ENCODE measurements at regions of chr1 and their contacts with region 1.

Region 1: DNA sequence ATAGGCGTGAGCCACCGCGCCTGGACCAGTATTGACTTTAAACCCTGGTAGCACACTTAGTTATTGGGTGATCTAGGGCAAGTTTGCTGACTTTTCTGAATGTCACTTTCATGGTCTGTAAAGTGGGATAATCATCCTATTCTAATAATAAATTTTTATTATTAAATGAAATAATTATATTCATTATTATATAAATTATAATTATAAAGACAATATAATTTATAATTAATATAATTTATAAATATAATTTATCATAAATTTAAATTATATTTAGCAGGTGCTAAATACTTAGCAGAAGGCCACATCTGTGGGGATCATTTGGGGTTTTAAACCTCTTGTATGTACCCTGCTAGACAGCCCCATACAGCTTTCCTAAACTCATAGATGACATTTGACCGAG is 59.7 kb downstream of the KANK4 start:
- DNase-seq: no peak

Region 2: DNA sequence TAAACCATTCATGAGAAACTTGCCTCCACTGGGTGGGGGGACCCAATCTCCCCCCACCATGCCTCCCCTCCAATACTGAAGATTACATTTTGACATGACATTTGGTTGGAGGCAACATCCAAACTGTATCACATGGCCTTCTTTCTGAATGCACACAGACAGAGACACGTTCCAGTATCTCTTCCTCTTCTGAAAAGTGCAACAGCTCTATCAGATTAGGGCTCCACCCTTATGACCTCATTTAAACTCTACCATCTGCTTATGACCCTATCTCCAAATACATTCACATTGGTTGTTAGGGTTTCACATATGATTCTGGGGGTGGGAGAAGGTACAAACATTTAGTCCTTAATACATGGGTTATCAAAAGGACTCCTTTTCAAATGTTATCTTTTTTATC is 1659.0 kb before region 1 on chr1:
- intact Hi-C with region 1: loop called in 1 of 2 experiments (anchors 5 kb)
- DNase-seq: no peak

Region 3: GRCh38 chr1:62247391-62248168 is 12.0 kb before region 1 on chr1:
- intact Hi-C with region 1: no loop called
- DNase-seq: no peak

Measured in posterior vena cava (tissue), 2 donors.